ENCODE measurements at regions of chr2 and their contacts with region 1.

Region 1: GRCh38 chr2:127387655-127388422 is at the start of gene MAP3K2:
- DNase-seq: peak; percentile 96
- ATAC-seq: peak; percentile 73
- H3K4me3 Mint-ChIP-seq: peak within 1 kb of the TSS; percentile 83
- H3K27ac Mint-ChIP-seq: peak within 1 kb of the TSS; percentile 93
- H3K4me1 Mint-ChIP-seq: peaks cover 72% of the 10 kb centered on the region
- H3K27me3 Mint-ChIP-seq: no peaks in the 10 kb centered on the region
- total RNA-seq, gene MAP3K2: 35.2 to 35.6 TPM

Region 2: DNA sequence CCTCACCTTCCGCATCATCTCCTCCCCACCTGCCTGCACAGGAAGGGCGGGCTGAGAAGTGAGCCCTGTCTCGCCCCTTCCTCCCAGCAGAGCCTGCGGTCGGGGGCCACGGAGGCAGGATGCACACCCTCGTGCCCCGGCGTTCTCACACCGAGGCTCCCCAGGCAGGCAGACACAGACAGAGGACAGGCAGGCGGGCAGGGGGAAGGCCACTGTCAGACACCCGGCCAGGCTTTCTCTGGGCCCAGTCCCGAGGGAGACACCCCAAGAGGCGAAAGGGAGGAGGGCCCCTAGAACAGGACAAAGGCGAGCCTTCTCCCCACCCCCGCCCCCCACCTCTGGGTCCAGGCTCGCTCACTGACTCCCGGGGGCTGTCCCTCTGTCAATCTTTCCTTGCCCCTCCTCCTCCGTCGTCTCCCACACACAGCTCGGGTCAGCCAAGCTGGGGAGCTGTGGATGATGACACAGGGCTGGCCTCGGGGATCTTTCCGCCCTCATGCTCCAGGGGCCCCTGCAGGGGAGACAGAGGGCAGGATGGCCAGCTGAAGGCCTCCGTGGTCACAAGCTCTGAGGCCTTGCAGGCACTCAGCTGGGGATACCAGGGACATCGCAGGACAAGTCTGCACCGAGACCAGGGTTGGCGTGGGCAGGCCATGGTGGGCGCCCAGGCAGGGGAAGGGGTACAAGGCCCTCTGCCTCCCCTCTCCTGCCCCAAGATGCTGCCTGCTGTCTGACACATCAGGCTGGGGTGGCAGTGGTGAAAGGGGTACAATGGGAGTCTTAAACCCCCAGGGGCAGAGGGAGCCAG is 305.8 kb before region 1 on chr2:
- CTCF ChIA-PET with region 1: no interaction called
- POLR2A ChIA-PET with region 1: no interaction called
- intact Hi-C with region 1: loop called in 1 of 2 experiments (anchors 2 kb)
- DNase-seq: peak; percentile 87
- ATAC-seq: peak; percentile 50
- H3K4me3 Mint-ChIP-seq: peak overlapping the region; percentile 82
- H3K27ac Mint-ChIP-seq: peak overlapping the region; percentile 91
- H3K4me1 Mint-ChIP-seq: peaks cover 75% of the 10 kb centered on the region
- H3K27me3 Mint-ChIP-seq: no peaks in the 10 kb centered on the region

Region 3: DNA sequence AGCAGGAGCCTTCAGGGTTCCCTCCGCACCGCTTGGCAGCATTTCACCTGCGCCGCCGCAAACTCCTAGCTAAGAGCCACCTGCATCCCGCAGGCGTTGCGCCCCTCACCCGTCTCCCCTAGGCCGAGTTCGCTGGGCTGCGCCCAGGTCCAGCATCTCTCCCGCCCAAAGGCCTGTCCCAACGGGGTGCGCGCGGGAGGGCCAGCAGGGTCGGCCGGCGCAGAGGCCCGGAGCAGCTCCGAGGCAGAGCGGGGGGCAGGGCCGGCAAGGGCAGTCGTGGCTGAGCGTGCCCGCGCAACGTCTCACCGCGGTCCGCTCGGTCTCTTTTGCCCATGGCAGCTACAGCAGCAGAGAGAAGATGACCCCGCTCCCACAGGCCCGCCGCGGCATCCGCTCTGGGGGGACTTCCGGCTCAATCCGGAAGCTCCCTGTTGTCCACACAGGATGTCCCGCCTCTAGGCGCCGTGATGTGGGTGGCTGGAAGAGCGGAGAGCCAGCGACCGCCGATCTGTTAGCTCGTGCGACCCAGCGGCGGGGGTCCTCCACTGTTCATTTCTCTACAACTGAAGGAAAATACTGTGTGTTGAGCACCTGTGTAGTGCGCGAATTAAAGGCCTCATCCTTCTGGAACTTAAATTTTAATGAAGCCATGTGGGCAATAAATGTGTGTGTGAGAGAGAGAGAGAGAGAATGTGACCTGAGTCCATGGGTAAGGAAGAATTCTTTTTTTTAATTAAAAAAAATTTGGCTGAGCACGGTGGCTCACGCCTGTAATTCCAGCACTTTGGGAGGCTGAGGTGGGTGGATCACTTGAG is 93.9 kb before region 1 on chr2 and contains the start of gene ERCC3:
- CTCF ChIA-PET with region 1: no interaction called
- POLR2A ChIA-PET with region 1: no interaction called
- intact Hi-C with region 1: loop called in 1 of 2 experiments (anchors 1 kb)
- DNase-seq: peak; percentile 90
- ATAC-seq: peak; percentile 98
- H3K4me3 Mint-ChIP-seq: peak within 1 kb of the TSS; percentile 98
- H3K27ac Mint-ChIP-seq: peak within 1 kb of the TSS; percentile 100
- H3K4me1 Mint-ChIP-seq: peaks cover 20% of the 10 kb centered on the region
- H3K27me3 Mint-ChIP-seq: no peaks in the 10 kb centered on the region
- total RNA-seq, gene ERCC3: 49.5 to 49.8 TPM

Region 4: DNA sequence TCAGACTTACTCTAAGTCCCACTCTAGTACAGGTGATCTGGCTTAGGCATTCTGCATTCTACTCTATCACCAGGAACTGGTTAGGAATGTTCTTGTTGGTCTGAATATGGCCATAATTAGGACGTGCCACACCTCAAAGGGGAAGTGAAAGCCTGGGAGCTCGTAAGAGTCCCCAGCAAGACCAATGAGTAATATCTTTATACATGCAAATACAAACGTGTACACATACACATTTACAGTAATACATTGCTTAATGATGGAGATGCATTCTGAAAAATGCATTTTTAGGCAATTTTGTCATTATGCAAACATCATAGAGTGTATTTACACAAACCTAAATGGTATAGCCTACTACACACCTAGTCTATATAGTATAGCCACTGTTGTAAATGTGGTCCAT is 74.4 kb before region 1 on chr2:
- CTCF ChIA-PET with region 1: no interaction called
- POLR2A ChIA-PET with region 1: no interaction called
- intact Hi-C with region 1: no loop called
- DNase-seq: no peak
- ATAC-seq: no peak
- H3K4me3 Mint-ChIP-seq: no peak overlapping the region
- H3K27ac Mint-ChIP-seq: no peak overlapping the region
- H3K4me1 Mint-ChIP-seq: no peaks in the 10 kb centered on the region
- H3K27me3 Mint-ChIP-seq: no peaks in the 10 kb centered on the region

Region 5: DNA sequence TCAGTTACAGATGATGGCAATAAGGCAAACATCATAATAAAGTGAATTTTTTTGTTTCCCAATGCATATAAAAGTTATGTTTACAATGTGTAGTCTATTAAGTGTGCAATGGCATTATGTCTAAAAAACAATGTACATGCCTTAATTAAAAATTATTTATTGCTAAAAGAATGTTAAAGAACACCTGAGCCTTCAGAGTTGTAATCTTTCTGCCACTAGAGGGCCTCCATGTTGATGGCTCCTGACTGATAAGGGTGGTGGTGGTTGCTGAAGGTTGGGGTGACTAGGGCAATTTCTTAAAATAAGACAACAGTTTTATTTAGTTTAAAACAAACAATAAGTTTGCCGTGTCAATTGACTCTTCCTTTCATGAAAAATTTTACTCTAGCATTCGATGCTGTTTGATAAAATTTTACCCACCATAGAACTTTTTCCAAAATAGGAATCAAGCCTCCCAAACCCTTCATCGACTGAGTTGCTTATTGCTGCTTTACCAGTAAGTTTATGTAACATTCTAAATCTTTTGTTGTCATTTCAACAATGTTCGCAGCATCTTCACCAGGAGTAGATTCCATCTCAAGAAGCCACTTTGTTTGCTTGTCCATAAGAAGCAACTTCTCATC is 32.3 kb before region 1 on chr2:
- CTCF ChIA-PET with region 1: no interaction called
- POLR2A ChIA-PET with region 1: no interaction called
- intact Hi-C with region 1: loop called in 1 of 2 experiments (anchors 2 kb)
- DNase-seq: peak; percentile 45
- ATAC-seq: peak; percentile 65
- H3K4me3 Mint-ChIP-seq: no peak overlapping the region
- H3K27ac Mint-ChIP-seq: no peak overlapping the region
- H3K4me1 Mint-ChIP-seq: peaks cover 53% of the 10 kb centered on the region
- H3K27me3 Mint-ChIP-seq: no peaks in the 10 kb centered on the region

Region 6: DNA sequence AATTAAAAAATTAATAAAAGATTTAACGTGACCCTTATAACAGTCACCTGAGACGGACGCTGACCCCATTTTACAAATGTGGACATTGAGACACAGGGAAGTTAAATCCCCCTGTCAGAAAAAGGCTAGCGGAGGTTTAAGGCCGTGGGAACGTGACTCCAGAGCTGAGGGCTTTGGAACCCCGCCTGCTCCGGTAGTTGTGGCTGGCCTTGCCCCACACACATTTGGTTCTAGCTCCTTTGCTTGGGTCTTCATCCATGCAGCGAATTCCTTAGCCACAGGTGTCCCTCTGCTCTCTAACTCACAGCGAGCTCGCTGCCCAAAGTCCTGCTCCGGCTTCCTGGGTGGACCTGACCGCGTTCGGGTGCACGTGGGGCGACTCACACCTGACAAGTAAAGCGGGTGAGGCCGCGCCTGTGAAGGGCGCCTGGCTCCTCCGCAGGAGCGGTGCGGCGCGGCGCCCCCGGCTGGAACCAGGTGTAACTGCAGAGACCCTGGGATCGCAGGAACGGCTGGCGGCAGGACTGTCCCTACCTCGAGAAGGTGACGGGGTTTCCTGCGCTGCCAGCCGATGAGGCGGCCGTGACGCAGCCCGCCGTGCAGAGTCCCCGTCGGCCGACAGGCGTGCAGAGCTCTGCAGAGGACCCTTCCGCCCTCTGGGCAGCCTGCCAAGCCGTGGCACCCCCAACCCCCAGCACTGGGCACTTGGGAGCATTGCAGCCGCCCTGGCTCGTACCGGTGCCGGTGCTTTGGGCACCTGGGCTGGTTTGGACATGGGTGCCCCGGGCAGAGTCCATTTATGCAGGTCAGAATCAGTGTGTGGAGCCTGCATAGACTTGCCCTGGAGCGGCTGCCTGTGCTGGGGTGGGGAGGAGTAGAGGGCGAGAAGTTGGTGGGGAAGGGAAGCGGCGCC is 28.0 kb after region 1 on chr2:
- CTCF ChIA-PET with region 1: interaction called, 5 read pairs
- POLR2A ChIA-PET with region 1: interaction called, 5 read pairs
- intact Hi-C with region 1: loop called in 1 of 2 experiments (anchors 1 kb)
- DNase-seq: peak; percentile 93
- ATAC-seq: peak; percentile 95
- H3K4me3 Mint-ChIP-seq: peak overlapping the region; percentile 62
- H3K27ac Mint-ChIP-seq: peak overlapping the region; percentile 56
- H3K4me1 Mint-ChIP-seq: peaks cover 31% of the 10 kb centered on the region
- H3K27me3 Mint-ChIP-seq: peaks cover 19% of the 10 kb centered on the region

Region 7: DNA sequence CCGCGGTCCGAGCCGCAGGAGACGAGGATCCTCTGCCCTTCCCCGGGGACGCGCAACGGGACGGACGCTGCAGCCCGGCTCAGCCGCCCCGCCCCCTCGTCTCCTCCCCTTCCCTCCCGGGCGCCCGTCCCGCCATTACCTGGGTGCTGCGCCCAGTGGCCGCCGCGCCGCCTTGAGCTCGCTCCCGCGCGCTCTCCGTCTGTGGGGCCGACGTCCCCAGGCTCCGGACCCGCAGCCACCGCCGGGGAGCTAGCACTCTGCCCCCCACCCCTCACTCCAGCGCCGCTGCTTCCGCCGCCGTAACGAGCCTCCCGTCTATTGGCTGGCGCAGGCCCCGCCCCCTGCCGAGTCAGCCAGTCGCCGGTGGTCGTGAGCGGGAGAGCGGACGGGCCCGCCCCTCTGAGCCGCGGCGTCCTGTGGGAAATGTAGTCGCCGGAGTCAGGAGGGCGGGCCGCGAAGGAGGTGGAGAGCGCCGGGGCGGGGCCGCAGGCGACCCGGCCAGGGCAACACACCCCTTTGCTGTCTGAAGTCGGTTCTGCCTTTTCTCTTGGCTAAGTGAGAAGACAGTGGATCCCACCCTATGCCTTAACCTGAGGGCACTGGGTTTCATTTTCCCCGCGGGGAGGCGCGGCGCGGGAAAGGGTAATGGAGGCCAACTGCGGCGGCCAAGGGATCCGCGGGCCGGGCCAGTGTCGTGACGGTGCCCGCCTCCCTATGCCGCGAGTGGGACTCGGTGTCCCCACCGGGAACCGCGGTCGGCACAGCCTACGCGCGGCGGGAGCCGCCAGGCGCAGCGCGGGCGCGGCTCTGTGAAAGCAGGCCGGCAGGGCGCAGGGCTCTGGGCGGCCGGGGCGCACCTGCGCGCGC is 640.2 kb after region 1 on chr2 and contains the start of gene SAP130:
- CTCF ChIA-PET with region 1: no interaction called
- POLR2A ChIA-PET with region 1: no interaction called
- intact Hi-C with region 1: loop called in 1 of 2 experiments (anchors 2 kb)
- DNase-seq: peak; percentile 99
- ATAC-seq: peak; percentile 83
- H3K4me3 Mint-ChIP-seq: peak within 1 kb of the TSS; percentile 93
- H3K27ac Mint-ChIP-seq: peak within 1 kb of the TSS; percentile 70
- H3K4me1 Mint-ChIP-seq: peaks cover 13% of the 10 kb centered on the region
- H3K27me3 Mint-ChIP-seq: no peaks in the 10 kb centered on the region
- total RNA-seq, gene SAP130: 28.2 to 35.8 TPM